ENCODE measurements at regions of chr11 and their contacts with region 1.

Region 1: DNA sequence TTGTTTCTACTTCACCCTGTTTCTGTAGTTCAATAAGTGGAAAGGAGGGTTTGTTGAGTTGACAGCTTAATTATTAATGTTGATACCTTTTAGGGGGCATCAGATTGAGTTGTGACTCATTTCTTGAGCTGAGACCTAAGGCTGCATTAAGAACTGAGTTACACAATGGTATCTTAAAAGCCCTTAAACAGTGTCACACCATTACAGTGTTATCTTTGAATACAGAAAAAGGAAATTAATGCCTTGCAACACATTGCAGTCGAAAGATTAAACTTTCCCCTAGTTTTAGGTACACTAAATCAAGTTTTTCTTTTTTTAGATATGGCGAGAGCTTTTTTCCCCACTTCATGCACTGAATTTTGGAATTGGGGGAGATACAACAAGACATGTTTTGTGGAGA is 16.7 kb downstream of the PAFAH1B2 start:
- DNase-seq: no peak
- H3K4me3 ChIP-seq: no peak overlapping the region
- CTCF ChIP-seq: no peak

Region 2: GRCh38 chr11:117143871-117144476 is 16.9 kb before region 1 on chr11 and contains the start of gene PAFAH1B2:
- CTCF ChIA-PET with region 1: interaction called, 13 read pairs
- POLR2A ChIA-PET with region 1: interaction called, 3 read pairs
- DNase-seq: no peak
- H3K4me3 ChIP-seq: peak within 1 kb of the TSS; percentile 89
- CTCF ChIP-seq: no peak